Esophagus muscularis mucosa (tissue), 4 donors: ENCODE measurements at regions of chr6 and their contacts with region 1.

Region 1: GRCh38 chr6:128339635-128340450 is 180.6 kb downstream of the PTPRK start:
- DNase-seq: no peak
- H3K4me3 ChIP-seq: no peak overlapping the region
- H3K27ac ChIP-seq: peak overlapping the region; percentile 13 to 52 (median 44)
- H3K4me1 ChIP-seq: peaks cover 10 to 66% (median 51%) of the 10 kb centered on the region in 4 donors
- H3K27me3 ChIP-seq: no peaks in the 10 kb centered on the region
- CTCF ChIP-seq: no peak
- EP300 ChIP-seq: no peak
- POLR2A ChIP-seq: no peak

Region 2: DNA sequence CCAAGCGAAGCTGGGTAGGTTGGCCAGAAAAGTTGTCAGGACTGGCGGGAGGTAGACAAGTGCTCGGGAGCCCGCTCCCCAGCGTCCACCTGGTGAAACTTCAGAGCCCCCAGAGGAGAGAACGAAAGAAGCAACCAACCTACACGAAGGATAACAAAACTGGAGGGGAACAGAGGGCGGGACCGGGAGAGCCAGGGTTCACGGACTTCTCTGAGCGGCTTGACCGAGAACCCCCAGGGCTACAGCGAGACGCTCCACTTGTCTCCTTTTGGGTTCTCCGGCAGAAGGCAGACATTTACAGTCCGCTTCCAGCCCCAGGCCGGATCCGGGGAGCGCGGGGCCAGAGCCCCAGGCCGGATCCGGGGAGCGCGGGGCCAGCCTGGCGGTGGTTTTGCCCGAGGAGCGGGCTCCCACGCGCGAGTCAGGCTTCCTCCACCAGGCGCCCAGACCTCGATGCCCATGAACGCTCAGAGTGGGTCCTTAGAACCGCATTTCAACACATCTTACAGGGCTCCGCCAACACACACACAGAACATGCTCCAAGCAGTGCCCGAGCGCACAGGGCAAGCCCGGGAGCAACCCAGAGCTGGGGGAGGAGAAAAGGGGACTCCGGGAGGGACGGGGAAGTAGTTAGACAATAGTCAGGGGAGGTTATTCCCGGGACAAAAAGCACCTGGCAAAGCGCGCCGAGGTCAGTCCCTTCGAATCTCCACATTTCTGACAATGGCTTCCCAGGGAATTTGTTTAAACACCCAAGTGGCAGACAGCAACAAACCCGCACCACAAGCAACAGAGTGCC is 179.5 kb after region 1 on chr6:
- intact Hi-C with region 1: loop called (anchors 10 kb)
- DNase-seq: no peak
- H3K4me3 ChIP-seq: peak overlapping the region; percentile 72 to 92 (median 86)
- H3K27ac ChIP-seq: peak overlapping the region; percentile 86 to 98 (median 94)
- H3K4me1 ChIP-seq: peaks cover 33 to 51% (median 51%) of the 10 kb centered on the region in 4 donors
- H3K27me3 ChIP-seq: no peaks in the 10 kb centered on the region
- CTCF ChIP-seq: peak; percentile 18 to 22 (median 21)
- EP300 ChIP-seq: no peak
- POLR2A ChIP-seq: no peak